GM10248 (cell line): ENCODE measurements at regions of chr12 and their contacts with region 1.

Region 1: GRCh38 chr12:67161322-67161918 is 107.7 kb upstream of the CAND1 start:
- DNase-seq: peak; percentile 29
- CTCF ChIP-seq: peak; percentile 53

Region 2: GRCh38 chr12:67141296-67142018 is 20.0 kb before region 1 on chr12:
- CTCF ChIA-PET with region 1: interaction called, 12 read pairs
- POLR2A ChIA-PET with region 1: no interaction called
- DNase-seq: no peak
- CTCF ChIP-seq: no peak

Region 3: GRCh38 chr12:67173258-67173657 is 11.8 kb after region 1 on chr12:
- CTCF ChIA-PET with region 1: interaction called, 16 read pairs
- POLR2A ChIA-PET with region 1: no interaction called
- DNase-seq: no peak
- CTCF ChIP-seq: no peak

Region 4: DNA sequence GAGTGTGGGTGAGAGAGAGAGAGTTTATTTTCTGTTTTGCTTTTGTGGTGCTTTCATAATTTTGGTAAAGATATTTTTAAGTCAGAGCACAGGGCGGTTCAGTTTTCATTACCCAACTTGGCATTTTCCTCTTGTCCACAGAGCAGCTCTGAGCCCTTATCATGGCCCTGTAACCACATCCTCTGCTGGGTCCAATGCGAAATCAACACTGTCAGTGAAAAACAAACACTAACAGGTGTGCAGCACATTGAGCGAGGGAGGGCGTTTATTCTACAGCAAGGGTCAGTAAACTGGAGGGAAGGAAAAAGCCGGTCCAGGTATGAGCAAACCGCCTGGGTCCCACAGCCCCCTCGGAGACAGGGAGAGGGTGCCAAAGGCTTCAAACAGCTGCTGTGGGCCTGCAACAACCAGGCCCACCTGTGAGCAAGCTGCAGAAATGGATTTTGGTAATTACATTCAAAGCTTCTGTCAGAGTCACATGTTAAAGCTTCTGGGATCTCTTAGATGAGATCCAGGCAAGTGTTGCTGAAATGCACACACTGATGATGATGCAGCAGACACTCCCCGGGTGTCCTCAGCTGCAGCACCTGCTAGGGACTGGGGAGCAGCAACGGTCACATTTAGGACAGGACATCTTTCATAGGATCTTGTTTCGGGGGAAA is 354.4 kb after region 1 on chr12:
- CTCF ChIA-PET with region 1: no interaction called
- POLR2A ChIA-PET with region 1: no interaction called
- DNase-seq: peak; percentile 12
- CTCF ChIP-seq: no peak